Naive thymus-derived CD4-positive, alpha-beta T cell (primary cell): ENCODE measurements at regions of chr7 and their contacts with region 1.

Region 1: DNA sequence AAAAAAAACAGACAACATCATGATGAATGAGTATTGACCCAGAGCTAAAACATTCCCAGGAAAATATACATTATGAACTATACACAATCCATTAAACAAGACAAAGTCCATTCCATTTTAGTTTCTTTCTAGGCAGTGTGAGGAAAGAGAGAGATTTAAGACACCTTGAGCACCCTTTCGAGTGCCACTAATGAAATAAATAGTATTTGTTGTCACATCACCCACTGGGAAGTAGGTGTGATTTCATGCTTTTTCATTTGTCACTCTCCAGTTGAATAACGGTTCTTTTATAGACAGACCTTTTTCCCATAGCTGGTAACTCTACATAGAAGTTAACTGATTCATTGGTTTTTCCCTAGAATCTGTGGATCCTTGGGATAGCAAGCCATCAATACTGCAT is 29.9 kb upstream of the SEMA3A start:
- DNase-seq: no peak
- ATAC-seq: no peak
- H3K4me3 ChIP-seq: no peak overlapping the region
- H3K4me3 Mint-ChIP-seq: no peak overlapping the region
- H3K27ac ChIP-seq: no peak overlapping the region
- H3K27ac Mint-ChIP-seq: no peak overlapping the region
- H3K4me1 ChIP-seq: no peaks in the 10 kb centered on the region
- H3K4me1 Mint-ChIP-seq: peaks cover 0 to 6% (median 0%) of the 10 kb centered on the region in 7 donors
- H3K27me3 ChIP-seq: no peaks in the 10 kb centered on the region
- H3K27me3 Mint-ChIP-seq: no peaks in the 10 kb centered on the region

Region 2: DNA sequence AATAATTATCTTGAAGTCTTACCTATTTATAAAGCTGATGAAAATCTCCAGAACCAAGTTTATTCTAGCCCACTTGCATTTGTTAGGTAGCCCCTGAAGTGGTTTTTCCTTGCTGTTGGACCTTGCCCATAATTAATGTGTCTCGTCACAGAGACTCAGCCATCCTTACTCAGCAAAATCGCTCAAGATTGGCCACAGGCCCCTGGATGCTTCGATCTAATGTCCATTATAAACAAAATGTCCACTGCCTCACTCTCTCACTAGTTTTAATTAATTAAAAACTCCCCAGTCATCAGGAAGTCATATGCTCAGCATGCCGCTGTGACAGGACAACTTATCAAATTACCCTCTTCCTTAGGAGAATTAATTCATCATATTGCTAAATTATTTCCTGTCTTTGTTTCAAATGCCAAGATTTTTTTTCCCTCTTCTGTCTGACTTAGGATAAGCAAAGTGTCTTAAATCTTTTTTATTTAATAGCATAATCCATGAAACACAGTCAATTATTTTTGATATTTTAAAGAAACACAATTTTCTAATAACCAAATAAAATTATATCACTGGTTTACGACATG is 935.0 kb before region 1 on chr7:
- CTCF ChIA-PET with region 1: no interaction called
- POLR2A ChIA-PET with region 1: no interaction called
- intact Hi-C with region 1: no loop called
- DNase-seq: no peak
- ATAC-seq: no peak
- H3K4me3 ChIP-seq: no peak overlapping the region
- H3K4me3 Mint-ChIP-seq: no peak overlapping the region
- H3K27ac ChIP-seq: no peak overlapping the region
- H3K27ac Mint-ChIP-seq: no peak overlapping the region
- H3K4me1 ChIP-seq: no peaks in the 10 kb centered on the region
- H3K4me1 Mint-ChIP-seq: no peaks in the 10 kb centered on the region
- H3K27me3 ChIP-seq: no peaks in the 10 kb centered on the region
- H3K27me3 Mint-ChIP-seq: no peaks in the 10 kb centered on the region

Region 3: GRCh38 chr7:84294847-84295455 is 70.4 kb after region 1 on chr7:
- CTCF ChIA-PET with region 1: no interaction called
- POLR2A ChIA-PET with region 1: no interaction called
- intact Hi-C with region 1: loop called in 1 of 2 experiments (anchors 5 kb)
- DNase-seq: no peak
- ATAC-seq: no peak
- H3K4me3 ChIP-seq: no peak overlapping the region
- H3K4me3 Mint-ChIP-seq: no peak overlapping the region
- H3K27ac ChIP-seq: no peak overlapping the region
- H3K27ac Mint-ChIP-seq: no peak overlapping the region
- H3K4me1 ChIP-seq: no peaks in the 10 kb centered on the region
- H3K4me1 Mint-ChIP-seq: no peaks in the 10 kb centered on the region
- H3K27me3 ChIP-seq: no peaks in the 10 kb centered on the region
- H3K27me3 Mint-ChIP-seq: no peaks in the 10 kb centered on the region

Region 4: DNA sequence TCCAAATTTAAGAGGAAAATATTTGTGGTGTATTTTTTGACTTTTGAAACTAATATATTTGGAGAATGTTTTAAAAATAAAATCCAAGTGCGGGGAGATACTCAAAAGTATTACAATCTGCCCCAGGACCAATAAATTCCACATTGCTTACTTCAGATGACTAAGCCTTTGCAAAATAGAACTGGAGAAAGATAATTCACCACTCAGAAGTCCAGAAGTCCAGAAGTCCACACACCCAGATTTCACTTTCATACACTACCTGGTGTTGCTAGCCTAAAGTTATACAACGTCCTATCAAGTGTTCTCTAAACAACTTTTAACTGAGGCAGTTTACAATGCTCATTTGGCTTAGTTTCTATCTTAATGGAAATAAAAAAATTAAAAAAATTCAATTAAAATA is 1449.4 kb after region 1 on chr7:
- CTCF ChIA-PET with region 1: no interaction called
- POLR2A ChIA-PET with region 1: no interaction called
- intact Hi-C with region 1: no loop called
- DNase-seq: no peak
- ATAC-seq: no peak
- H3K4me3 ChIP-seq: no peak overlapping the region
- H3K4me3 Mint-ChIP-seq: no peak overlapping the region
- H3K27ac ChIP-seq: no peak overlapping the region
- H3K27ac Mint-ChIP-seq: no peak overlapping the region
- H3K4me1 ChIP-seq: no peaks in the 10 kb centered on the region
- H3K4me1 Mint-ChIP-seq: no peaks in the 10 kb centered on the region
- H3K27me3 ChIP-seq: no peaks in the 10 kb centered on the region
- H3K27me3 Mint-ChIP-seq: no peaks in the 10 kb centered on the region